ENCODE measurements at regions of chr3 and their contacts with region 1.

Region 1: DNA sequence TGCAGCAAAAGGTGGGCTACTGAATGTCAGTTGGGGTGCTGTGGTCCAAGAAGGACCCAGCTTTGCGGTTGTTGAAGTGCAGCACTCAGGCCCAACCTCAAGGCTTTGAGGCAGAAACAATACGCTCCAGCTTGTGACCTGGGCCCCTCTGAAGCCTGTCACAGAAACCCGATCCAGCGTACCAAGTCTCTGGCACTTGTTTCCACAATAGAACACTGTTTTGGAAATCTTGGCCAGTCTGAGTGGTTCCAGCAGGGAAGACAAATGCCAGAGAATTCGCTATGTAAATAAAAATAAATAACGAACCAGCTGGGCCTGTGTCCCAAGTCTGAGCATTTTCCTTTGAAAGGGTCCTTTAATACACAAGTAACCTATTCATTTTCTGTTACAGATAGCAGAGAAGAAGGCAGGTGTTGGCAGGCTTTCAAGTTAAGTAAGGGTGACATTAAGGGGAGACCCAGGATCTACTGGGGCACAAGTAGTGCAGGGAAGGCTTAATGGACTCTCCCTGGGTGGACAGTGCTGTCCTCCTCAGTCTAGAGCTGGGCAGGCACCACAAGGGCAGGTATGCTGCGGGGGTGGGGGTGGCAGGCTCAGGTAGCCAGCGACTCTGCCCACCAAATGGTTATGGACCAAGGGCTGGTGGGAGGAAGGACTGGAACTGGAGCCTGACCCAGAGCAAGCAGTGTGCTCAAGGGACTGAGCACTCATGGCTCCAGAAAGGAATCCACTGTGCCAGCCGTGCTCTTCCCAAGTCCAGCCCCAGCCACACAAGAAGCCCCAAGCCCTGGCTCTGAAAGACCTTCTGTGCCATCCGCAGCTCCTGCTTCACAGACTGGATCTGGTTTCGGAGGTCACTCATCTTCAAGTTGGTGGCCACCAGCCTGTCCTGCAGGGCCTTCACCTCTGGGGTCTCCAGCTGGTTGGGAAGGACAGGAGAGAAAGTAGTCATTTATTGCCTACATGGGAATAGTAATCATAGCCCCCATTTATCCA is 26.3 kb downstream of the CCDC13 start:
- DNase-seq: peak; percentile 30
- H3K4me3 ChIP-seq: no peak overlapping the region
- H3K27ac ChIP-seq: no peak overlapping the region
- H3K27me3 ChIP-seq: no peaks in the 10 kb centered on the region
- CTCF ChIP-seq: no peak

Region 2: DNA sequence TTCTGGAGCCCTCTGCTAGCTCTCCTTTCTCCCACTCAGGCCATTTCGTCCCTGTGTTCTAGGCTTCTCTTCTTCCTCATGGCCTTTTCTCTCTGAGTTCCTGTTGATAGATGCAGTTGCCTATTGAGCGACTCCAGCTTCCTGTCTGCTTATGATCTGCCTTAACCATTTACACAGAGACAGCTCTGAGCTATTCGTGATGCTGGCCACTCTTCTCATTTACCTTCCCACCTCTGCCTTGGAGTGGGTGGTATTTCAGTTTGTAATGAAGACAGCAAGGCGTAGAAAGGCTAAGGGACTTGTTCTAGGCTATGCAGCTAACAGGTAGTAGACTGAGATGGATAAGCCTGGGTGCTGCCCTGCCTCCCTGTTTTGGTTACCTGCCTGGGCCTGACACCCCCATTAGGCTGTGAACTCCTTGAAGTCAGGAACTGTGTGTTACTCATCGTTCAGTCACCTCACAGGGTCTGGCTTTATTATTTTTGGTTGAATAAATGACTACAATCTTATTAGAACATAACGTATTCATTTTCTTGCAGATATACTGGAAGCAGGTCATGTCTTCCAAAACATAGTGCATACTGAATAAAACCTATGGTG is 105.9 kb before region 1 on chr3:
- CTCF ChIA-PET with region 1: no interaction called
- POLR2A ChIA-PET with region 1: no interaction called
- DNase-seq: no peak
- H3K4me3 ChIP-seq: no peak overlapping the region
- H3K27ac ChIP-seq: no peak overlapping the region
- H3K27me3 ChIP-seq: no peaks in the 10 kb centered on the region
- CTCF ChIP-seq: no peak

Region 3: GRCh38 chr3:42652611-42653302 is 94.0 kb before region 1 on chr3:
- CTCF ChIA-PET with region 1: interaction called, 11 read pairs
- POLR2A ChIA-PET with region 1: no interaction called
- DNase-seq: peak; percentile 34
- H3K4me3 ChIP-seq: peak overlapping the region; percentile 64
- H3K27ac ChIP-seq: peak overlapping the region; percentile 82
- H3K27me3 ChIP-seq: no peaks in the 10 kb centered on the region
- CTCF ChIP-seq: no peak

Region 4: DNA sequence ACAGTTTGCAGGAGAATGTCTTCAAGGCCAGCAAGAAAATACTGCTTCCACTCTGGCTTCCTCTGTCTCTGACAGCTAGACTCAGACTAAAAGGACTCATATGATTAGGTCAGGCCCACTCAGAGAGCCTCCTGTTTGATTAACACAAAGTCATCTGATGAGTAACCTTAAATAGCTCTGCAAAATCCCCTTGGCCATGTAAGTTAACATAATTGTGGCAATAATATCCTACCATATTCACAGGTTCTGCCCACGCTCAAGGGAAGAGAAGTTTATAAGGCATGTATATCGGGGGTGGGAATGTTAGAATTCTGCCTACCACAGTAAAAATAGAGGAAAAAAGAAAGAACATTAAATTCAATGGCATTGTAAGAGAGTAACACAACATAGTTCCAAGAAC is 23.5 kb before region 1 on chr3:
- CTCF ChIA-PET with region 1: interaction called, 12 read pairs
- POLR2A ChIA-PET with region 1: no interaction called
- DNase-seq: no peak
- H3K4me3 ChIP-seq: no peak overlapping the region
- H3K27ac ChIP-seq: no peak overlapping the region
- H3K27me3 ChIP-seq: peaks cover 23% of the 10 kb centered on the region
- CTCF ChIP-seq: no peak

Measured in AG04450 (cell line).